ENCODE measurements at regions of chr11 and their contacts with region 1.

Region 1: DNA sequence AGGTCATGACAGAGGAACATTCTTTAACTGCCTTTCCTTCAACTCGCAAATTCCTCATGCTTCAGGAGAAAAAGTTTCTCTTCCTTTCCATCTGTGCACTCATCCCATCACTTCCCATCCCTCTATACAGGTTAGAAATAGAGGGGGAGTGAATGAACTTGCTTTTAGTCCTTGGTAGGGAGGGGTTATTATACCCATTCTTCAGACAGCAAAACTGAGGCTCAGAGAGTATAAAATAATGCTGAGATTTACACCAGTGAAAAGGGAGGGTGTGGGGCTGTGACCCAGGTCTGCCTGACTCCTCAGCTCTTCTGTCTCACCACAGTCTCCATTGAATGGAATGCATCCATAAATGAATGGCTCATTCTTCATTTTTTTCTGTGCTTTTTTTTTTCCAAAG is 109.4 kb upstream of the RCN1 start:
- DNase-seq: no peak
- H3K4me3 ChIP-seq: no peak overlapping the region
- H3K27ac ChIP-seq: no peak overlapping the region
- H3K4me1 ChIP-seq: no peaks in the 10 kb centered on the region
- H3K27me3 ChIP-seq: peaks cover 6 to 35% (median 11%) of the 10 kb centered on the region in 5 experiments

Region 2: GRCh38 chr11:31369348-31370329 is 611.8 kb before region 1 on chr11 and contains the starts of genes DCDC1 and DNAJC24:
- CTCF ChIA-PET with region 1: no interaction called
- POLR2A ChIA-PET with region 1: interaction called, 11 read pairs
- DNase-seq: peak; percentile 95 to 97 (median 97)
- H3K4me3 ChIP-seq: peak within 1 kb of the TSS; percentile 78 to 99 (median 96)
- H3K27ac ChIP-seq: peak within 1 kb of the TSS; percentile 64 to 80
- H3K4me1 ChIP-seq: peaks cover 7 to 23% (median 14%) of the 10 kb centered on the region in 4 experiments
- H3K27me3 ChIP-seq: peaks cover 0 to 9% (median 0%) of the 10 kb centered on the region in 5 experiments